Activated T-helper 1 cell treated with anti-CD3 and anti-CD28 coated beads, Interleukin-12 subunit alpha, Interleukin-12 subunit beta, Interleukin-2, Interleukin-4 antibody, amounts not matched to agents 30 ng/mL and 10 ng/mL and 1 ng/mL, durations not matched to agents 14 hours and 24 hours and 36 hours (primary cell): ENCODE measurements at regions of chr22 and their contacts with region 1.

Region 1: GRCh38 chr22:49930739-49931412 is 12.4 kb downstream of the CRELD2 start:
- DNase-seq: no peak
- H3K4me3 Mint-ChIP-seq: peak overlapping the region; percentile 60
- H3K27ac Mint-ChIP-seq: peak overlapping the region; percentile 47
- H3K4me1 Mint-ChIP-seq: peaks cover 23% of the 10 kb centered on the region
- H3K27me3 Mint-ChIP-seq: no peaks in the 10 kb centered on the region

Region 2: DNA sequence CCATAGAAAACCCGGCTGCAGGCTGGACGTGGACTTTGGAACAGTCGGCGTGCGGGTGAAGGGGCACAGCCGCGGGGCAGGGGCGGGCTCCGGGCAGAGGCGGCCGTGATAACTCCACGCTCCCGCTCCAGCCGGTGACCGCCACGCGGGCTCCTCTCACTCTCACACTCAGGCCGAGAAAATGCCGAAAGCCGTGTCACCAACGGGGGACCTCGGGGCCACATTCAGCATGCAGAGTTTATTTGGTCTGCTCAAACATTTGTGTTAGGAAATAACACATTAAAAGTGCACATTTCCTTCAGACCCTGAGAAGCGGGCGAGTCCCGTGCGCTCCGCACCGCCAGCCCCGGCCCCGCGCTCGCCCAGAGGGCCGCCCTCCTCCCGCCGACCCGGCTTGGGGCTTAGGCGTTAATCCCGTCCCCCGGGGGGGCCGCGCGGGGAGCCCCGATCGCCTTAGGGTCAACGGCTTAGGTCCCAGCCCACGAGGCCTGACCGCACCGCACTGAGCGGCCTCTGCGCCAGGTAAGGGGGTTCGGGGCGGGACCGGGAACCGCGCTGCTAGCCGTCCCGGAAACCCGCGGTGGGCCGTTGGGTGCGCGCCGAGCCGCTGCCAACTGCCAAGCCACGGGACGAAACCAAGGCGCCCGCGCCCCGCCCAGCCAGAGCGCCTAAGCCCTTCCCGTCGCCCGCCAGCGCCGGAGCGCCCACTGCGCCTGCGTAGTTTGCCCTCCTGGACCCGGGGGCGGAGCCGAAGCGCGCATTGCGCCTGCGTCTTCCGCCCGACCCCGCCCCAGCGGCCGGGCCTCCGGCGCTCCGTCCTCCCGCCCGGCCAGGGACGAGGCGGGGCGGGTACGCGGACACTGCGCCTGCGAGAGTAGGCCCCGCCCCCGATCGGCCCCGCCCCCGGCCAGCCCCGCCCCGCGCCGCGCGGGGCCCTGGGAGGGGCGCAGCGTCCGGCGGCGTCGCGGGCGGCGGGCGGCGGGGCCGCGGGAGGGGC is 77.7 kb before region 1 on chr22 and contains the start of gene ZBED4:
- intact Hi-C with region 1: no loop called
- DNase-seq: peak; percentile 99
- H3K4me3 Mint-ChIP-seq: peak within 1 kb of the TSS; percentile 98
- H3K27ac Mint-ChIP-seq: peak within 1 kb of the TSS; percentile 97
- H3K4me1 Mint-ChIP-seq: peaks cover 32% of the 10 kb centered on the region
- H3K27me3 Mint-ChIP-seq: peaks cover 10% of the 10 kb centered on the region
- total RNA-seq, gene ZBED4: 19.4 and 20.9 TPM in 2 replicates

Region 3: GRCh38 chr22:49867303-49868265 is 63.3 kb before region 1 on chr22:
- intact Hi-C with region 1: no loop called
- DNase-seq: no peak
- H3K4me3 Mint-ChIP-seq: peak overlapping the region; percentile 51
- H3K27ac Mint-ChIP-seq: peak overlapping the region; percentile 82
- H3K4me1 Mint-ChIP-seq: peaks cover 47% of the 10 kb centered on the region
- H3K27me3 Mint-ChIP-seq: no peaks in the 10 kb centered on the region

Region 4: GRCh38 chr22:49960159-49961004 is 29.5 kb after region 1 on chr22 and contains the start of gene PIM3:
- intact Hi-C with region 1: loop called (anchors 1 kb)
- DNase-seq: peak; percentile 93
- H3K4me3 Mint-ChIP-seq: peak within 1 kb of the TSS; percentile 90
- H3K27ac Mint-ChIP-seq: peak within 1 kb of the TSS; percentile 95
- H3K4me1 Mint-ChIP-seq: peaks cover 26% of the 10 kb centered on the region
- H3K27me3 Mint-ChIP-seq: no peaks in the 10 kb centered on the region
- total RNA-seq, gene PIM3: 290 and 291 TPM in 2 replicates

Region 5: GRCh38 chr22:49992921-49993648 is 62.2 kb after region 1 on chr22:
- intact Hi-C with region 1: loop called (anchors 1 kb)
- DNase-seq: peak; percentile 48
- H3K4me3 Mint-ChIP-seq: no peak overlapping the region
- H3K27ac Mint-ChIP-seq: no peak overlapping the region
- H3K4me1 Mint-ChIP-seq: peaks cover 10% of the 10 kb centered on the region
- H3K27me3 Mint-ChIP-seq: peaks cover 3% of the 10 kb centered on the region

Region 6: GRCh38 chr22:50030297-50031188 is 99.7 kb after region 1 on chr22:
- intact Hi-C with region 1: loop called (anchors 1 kb)
- DNase-seq: peak; percentile 76
- H3K4me3 Mint-ChIP-seq: no peak overlapping the region
- H3K27ac Mint-ChIP-seq: no peak overlapping the region
- H3K4me1 Mint-ChIP-seq: peaks cover 8% of the 10 kb centered on the region
- H3K27me3 Mint-ChIP-seq: peaks cover 5% of the 10 kb centered on the region

Region 7: DNA sequence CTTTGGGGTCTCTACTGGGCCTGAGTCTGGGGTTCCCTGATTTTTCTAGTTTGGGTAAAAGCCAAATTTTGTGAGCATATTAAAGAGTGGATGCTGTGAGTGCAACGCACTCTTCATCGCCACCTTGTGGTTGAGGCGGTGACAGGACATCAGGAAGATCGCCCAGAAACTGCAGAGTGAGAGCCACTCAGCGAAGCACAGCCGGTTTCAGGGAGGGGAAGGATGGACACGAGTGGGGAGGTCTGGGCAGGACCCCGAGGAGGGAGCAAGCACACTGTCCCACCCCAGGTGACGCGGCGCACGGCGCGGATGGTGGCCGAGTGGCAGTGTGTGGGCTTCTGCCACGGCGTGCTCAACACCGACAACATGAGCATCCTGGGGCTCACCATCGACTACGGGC is 279.0 kb after region 1 on chr22:
- intact Hi-C with region 1: loop called (anchors 1 kb)
- DNase-seq: no peak
- H3K4me3 Mint-ChIP-seq: no peak overlapping the region
- H3K27ac Mint-ChIP-seq: no peak overlapping the region
- H3K4me1 Mint-ChIP-seq: peaks cover 5% of the 10 kb centered on the region
- H3K27me3 Mint-ChIP-seq: no peaks in the 10 kb centered on the region